Endothelial cell of umbilical vein (primary cell): ENCODE measurements at regions of chr1 and their contacts with region 1.

Region 1: GRCh38 chr1:214328770-214329469 is 48.0 kb downstream of the SMYD2 start:
- DNase-seq: peak; percentile 77
- H3K4me3 ChIP-seq: no peak overlapping the region
- H3K27ac ChIP-seq: no peak overlapping the region
- H3K4me1 ChIP-seq: peaks cover 9% of the 10 kb centered on the region
- H3K27me3 ChIP-seq: no peaks in the 10 kb centered on the region
- CTCF ChIP-seq: peak; percentile 84 to 92
- POLR2A ChIP-seq: no peak

Region 2: GRCh38 chr1:213122514-213122929 is 1206.4 kb before region 1 on chr1:
- CTCF ChIA-PET with region 1: interaction called, 10 read pairs
- POLR2A ChIA-PET with region 1: no interaction called
- dilution Hi-C with region 1: no loop called
- intact Hi-C with region 1: loop called (anchors 5 kb)
- DNase-seq: peak; percentile 66
- H3K4me3 ChIP-seq: no peak overlapping the region
- H3K27ac ChIP-seq: no peak overlapping the region
- H3K4me1 ChIP-seq: peaks cover 39% of the 10 kb centered on the region
- H3K27me3 ChIP-seq: no peaks in the 10 kb centered on the region
- CTCF ChIP-seq: peak; percentile 18 to 21
- POLR2A ChIP-seq: no peak

Region 3: GRCh38 chr1:214066936-214067335 is 262.0 kb before region 1 on chr1:
- CTCF ChIA-PET with region 1: no interaction called
- POLR2A ChIA-PET with region 1: no interaction called
- dilution Hi-C with region 1: no loop called
- intact Hi-C with region 1: no loop called
- DNase-seq: no peak
- H3K4me3 ChIP-seq: no peak overlapping the region
- H3K27ac ChIP-seq: no peak overlapping the region
- H3K4me1 ChIP-seq: no peaks in the 10 kb centered on the region
- H3K27me3 ChIP-seq: no peaks in the 10 kb centered on the region
- CTCF ChIP-seq: no peak
- POLR2A ChIP-seq: no peak

Region 4: GRCh38 chr1:214123061-214123784 is 205.7 kb before region 1 on chr1:
- CTCF ChIA-PET with region 1: interaction called, 39 read pairs
- POLR2A ChIA-PET with region 1: no interaction called
- dilution Hi-C with region 1: no loop called
- intact Hi-C with region 1: loop called (anchors 1 kb)
- DNase-seq: peak; percentile 88
- H3K4me3 ChIP-seq: no peak overlapping the region
- H3K27ac ChIP-seq: peak overlapping the region; percentile 75
- H3K4me1 ChIP-seq: peaks cover 25% of the 10 kb centered on the region
- H3K27me3 ChIP-seq: no peaks in the 10 kb centered on the region
- CTCF ChIP-seq: peak; percentile 64 to 67
- POLR2A ChIP-seq: no peak

Region 5: GRCh38 chr1:214281021-214281719 is 47.8 kb before region 1 on chr1 and contains the start of gene SMYD2:
- CTCF ChIA-PET with region 1: interaction called, 12 read pairs
- POLR2A ChIA-PET with region 1: no interaction called
- dilution Hi-C with region 1: no loop called
- intact Hi-C with region 1: no loop called
- DNase-seq: peak; percentile 56
- H3K4me3 ChIP-seq: peak within 1 kb of the TSS; percentile 66 to 79 (median 77)
- H3K27ac ChIP-seq: peak within 1 kb of the TSS; percentile 59
- H3K4me1 ChIP-seq: peaks cover 4% of the 10 kb centered on the region
- H3K27me3 ChIP-seq: no peaks in the 10 kb centered on the region
- CTCF ChIP-seq: no peak
- POLR2A ChIP-seq: peak; percentile 78
- total RNA-seq, gene SMYD2: 20.9 and 22.0 TPM in 2 replicates

Region 6: DNA sequence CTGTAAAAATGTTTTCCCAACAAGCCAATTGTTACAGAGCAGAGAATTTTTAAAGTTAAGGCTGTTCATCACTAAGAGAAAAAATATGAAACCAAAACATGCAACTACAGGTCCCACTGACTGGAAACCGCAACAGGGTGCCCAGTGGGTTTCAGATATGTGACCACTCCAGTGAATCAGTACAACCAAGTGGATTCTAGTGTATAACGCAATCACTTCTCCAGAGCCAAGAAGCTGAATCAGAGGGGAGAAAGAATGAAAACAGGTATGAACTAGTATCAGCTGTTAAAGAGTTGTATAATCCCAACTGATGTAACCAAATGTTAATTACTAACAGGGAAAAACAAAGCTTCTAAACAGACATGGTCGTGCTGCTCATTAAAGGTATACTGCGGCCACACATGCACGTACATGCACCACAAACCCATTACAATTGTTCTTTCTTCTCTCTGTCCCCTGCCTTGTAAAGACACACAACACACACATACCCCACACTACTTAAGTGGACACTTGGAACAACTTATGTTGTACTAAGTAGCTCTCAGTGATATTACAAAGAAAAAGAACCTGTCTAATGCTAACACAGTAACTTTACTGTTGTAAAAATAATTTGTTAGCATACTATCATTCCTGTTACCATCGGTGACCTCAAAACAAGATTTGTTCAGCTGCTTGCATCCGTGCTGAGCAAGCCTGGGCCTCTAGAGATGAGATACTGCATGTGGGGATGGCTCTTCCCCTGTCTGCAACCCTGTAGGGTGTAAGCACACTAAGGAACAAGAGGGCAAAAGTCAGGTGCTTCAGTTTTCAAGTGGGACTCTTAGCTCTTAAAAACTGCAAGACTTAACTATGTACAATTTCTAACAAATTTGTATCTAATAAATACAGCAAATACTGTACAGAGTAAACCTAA is 148.3 kb after region 1 on chr1:
- CTCF ChIA-PET with region 1: interaction called, 10 read pairs
- POLR2A ChIA-PET with region 1: no interaction called
- dilution Hi-C with region 1: no loop called
- intact Hi-C with region 1: no loop called
- DNase-seq: peak; percentile 75
- H3K4me3 ChIP-seq: peak overlapping the region in 1 of 3 experiments; percentile 15
- H3K27ac ChIP-seq: peak overlapping the region; percentile 70
- H3K4me1 ChIP-seq: peaks cover 28% of the 10 kb centered on the region
- H3K27me3 ChIP-seq: no peaks in the 10 kb centered on the region
- CTCF ChIP-seq: no peak
- POLR2A ChIP-seq: no peak

Region 7: GRCh38 chr1:214590696-214591095 is 261.8 kb after region 1 on chr1:
- CTCF ChIA-PET with region 1: interaction called, 359 read pairs
- POLR2A ChIA-PET with region 1: no interaction called
- dilution Hi-C with region 1: loop called (anchors 25 kb)
- intact Hi-C with region 1: loop called (anchors 1 kb)
- DNase-seq: no peak
- H3K4me3 ChIP-seq: no peak overlapping the region
- H3K27ac ChIP-seq: no peak overlapping the region
- H3K4me1 ChIP-seq: no peaks in the 10 kb centered on the region
- H3K27me3 ChIP-seq: no peaks in the 10 kb centered on the region
- CTCF ChIP-seq: peak in 1 of 2 donors; percentile 5
- POLR2A ChIP-seq: no peak

Region 8: DNA sequence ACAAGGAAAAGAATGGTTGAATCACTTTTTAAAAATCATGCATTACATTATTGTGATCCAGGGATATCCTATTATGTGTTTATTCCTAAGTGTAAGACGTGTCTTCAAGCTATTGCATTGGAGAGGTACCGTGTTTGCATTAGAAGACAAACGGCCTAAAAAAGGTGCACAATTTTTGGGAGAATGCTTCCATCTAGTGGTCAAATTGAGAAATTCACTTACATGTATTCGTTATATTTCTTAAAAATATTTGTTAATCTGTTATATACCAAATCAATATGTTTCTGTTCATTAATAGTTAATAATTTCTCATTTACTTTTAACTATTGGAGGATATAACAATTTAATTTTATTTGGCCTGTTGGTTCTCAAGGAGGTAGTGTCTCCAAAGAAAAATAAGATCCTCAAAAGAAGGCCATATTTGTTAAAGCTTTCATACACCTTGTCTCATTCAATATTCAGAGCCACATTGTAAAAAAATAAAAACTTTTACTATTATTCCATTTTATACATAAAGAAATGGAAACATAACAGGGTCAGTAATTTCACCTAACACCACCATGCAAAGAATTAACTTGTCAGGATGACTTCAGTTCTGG is 1197.7 kb after region 1 on chr1:
- CTCF ChIA-PET with region 1: interaction called, 43 read pairs
- POLR2A ChIA-PET with region 1: no interaction called
- dilution Hi-C with region 1: no loop called
- intact Hi-C with region 1: loop called (anchors 5 kb)
- DNase-seq: peak; percentile 61
- H3K4me3 ChIP-seq: no peak overlapping the region
- H3K27ac ChIP-seq: no peak overlapping the region
- H3K4me1 ChIP-seq: no peaks in the 10 kb centered on the region
- H3K27me3 ChIP-seq: peaks cover 0 to 2% of the 10 kb centered on the region in 2 experiments
- CTCF ChIP-seq: peak; percentile 32 to 36
- POLR2A ChIP-seq: no peak